Colonic mucosa (tissue), 4 donors: ENCODE measurements at regions of chr6 and their contacts with region 1.

Region 1: GRCh38 chr6:12504319-12504966 is 212.1 kb upstream of the PHACTR1 start:
- DNase-seq: peak; percentile 54
- H3K4me3 ChIP-seq: no peak overlapping the region
- H3K27ac ChIP-seq: no peak overlapping the region
- H3K4me1 ChIP-seq: no peaks in the 10 kb centered on the region
- H3K27me3 ChIP-seq: no peaks in the 10 kb centered on the region
- CTCF ChIP-seq: peak; percentile 41

Region 2: DNA sequence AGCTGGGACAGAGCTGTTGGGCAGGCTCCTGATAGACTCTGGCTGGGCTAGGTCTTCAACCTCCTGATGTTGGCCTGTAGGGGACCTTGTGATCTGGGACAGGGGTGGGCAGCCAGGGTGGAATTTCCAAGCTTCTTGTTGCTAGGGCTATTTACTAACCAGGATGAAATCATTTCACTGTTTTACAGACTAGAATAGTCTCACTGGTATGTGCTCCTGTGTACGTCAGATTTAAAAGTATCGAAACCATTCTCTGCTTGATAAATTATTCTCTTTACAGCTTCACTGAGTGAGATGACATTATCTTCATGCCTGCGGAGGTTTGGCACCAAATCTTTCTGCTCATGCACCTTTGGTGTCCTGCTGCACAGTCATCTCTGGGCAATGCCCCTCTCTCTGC is 203.4 kb before region 1 on chr6:
- intact Hi-C with region 1: loop called (anchors 10 kb)
- DNase-seq: no peak
- H3K4me3 ChIP-seq: no peak overlapping the region
- H3K27ac ChIP-seq: no peak overlapping the region
- H3K4me1 ChIP-seq: peaks cover 6% of the 10 kb centered on the region
- H3K27me3 ChIP-seq: no peaks in the 10 kb centered on the region
- CTCF ChIP-seq: no peak